Activated T-helper 2 cell treated with anti-CD3 and anti-CD28 coated beads, Interferon-gamma antibody, Interleukin-2, Interleukin-4, amounts not matched to agents 10 μg/mL and 5 μg/mL and 100 μg/mL, durations not matched to agents 14 hours and 24 hours and 36 hours (primary cell): ENCODE measurements at regions of chr13 and their contacts with region 1.

Region 1: DNA sequence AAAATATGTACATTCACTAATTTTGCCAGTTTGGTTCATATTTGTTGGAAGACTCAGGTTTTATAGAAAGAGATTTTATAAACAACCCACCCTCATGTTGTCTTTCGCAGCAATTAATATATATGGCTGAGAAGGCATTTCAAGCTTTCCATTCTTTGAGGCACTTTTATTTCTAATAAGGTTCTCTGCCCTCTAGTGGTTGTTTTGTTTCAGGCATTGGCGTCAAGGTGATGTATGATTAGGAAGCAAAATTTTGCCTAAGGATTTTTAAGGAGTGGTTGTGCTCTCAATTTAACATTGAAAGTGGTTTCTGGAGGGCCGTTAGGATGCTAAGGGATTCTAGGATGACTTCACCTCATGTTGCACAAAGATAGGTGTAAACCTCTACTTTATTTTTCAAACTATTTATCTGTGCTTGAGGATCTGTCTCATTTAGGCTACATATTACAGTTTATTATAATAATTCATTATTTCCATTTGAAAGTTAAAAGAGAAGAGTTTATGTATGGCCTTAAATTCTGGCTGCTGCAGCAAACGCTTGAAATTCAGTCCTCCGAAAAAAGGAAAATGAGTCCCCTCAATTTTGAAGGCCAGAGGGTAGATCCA is 35.9 kb downstream of the OXGR1 start:
- DNase-seq: no peak
- H3K4me3 Mint-ChIP-seq: no peak overlapping the region
- H3K27ac Mint-ChIP-seq: no peak overlapping the region
- H3K4me1 Mint-ChIP-seq: no peaks in the 10 kb centered on the region
- H3K27me3 Mint-ChIP-seq: no peaks in the 10 kb centered on the region

Region 2: GRCh38 chr13:96020155-96020575 is 938.2 kb before region 1 on chr13:
- intact Hi-C with region 1: loop called (anchors 5 kb)
- DNase-seq: no peak
- H3K4me3 Mint-ChIP-seq: no peak overlapping the region
- H3K27ac Mint-ChIP-seq: no peak overlapping the region
- H3K4me1 Mint-ChIP-seq: no peaks in the 10 kb centered on the region
- H3K27me3 Mint-ChIP-seq: no peaks in the 10 kb centered on the region